Right ventricle myocardium inferior (tissue), 1 donor: ENCODE measurements at regions of chr3 and their contacts with region 1.

Region 1: GRCh38 chr3:111859974-111860859 is 1.2 kb downstream of the PHLDB2 start:
- DNase-seq: peak; percentile 84
- ATAC-seq: peak; percentile 74

Region 2: DNA sequence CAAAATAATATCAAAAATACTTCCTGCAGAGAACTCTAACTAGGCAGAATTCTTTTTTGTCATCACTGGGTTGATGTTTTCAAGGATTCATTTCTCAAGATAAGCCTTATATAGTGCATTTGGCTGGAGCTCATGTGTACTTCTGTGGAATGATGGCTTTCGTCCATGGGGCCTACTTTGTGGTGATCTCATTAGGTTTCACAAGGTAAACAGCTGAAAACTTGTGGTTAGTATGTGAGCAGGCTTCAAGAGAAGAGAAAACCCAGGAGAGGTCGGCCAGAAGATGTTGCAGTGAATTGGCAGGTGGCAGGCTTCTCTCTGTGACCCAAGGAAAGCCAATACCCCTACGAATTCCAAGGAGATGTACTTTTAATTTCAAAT is 122.5 kb before region 1 on chr3:
- intact Hi-C with region 1: loop called (anchors 1 kb)
- DNase-seq: no peak
- ATAC-seq: peak; percentile 85

Region 3: DNA sequence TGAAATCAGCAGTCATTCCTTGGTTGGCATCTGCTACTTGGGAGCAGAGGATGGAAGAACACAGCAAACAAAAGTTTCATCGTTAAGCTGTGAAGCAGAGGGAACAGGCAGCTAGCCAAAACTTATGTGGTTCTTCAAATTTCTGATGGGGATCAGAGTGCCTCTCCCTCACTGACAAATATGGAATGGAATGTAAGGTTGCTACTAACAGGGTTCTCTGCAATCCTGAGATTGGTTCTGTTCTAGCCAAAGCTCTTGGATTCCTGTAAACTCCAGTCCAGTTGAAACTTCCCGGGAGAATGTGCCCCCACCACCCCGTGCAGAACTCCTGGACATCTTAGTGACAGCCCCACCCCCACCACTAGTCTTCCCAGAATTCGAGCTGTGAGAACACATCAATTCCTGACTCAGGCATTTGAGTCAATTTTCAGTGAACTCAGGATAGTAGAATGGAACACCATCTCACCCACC is 57.1 kb before region 1 on chr3:
- intact Hi-C with region 1: loop called (anchors 5 kb)
- DNase-seq: no peak
- ATAC-seq: peak; percentile 83

Region 4: GRCh38 chr3:111917300-111917699 is 57.1 kb after region 1 on chr3:
- intact Hi-C with region 1: loop called (anchors 2 kb)
- DNase-seq: no peak
- ATAC-seq: no peak

Region 5: GRCh38 chr3:111967651-111968274 is 107.5 kb after region 1 on chr3:
- intact Hi-C with region 1: loop called (anchors 1 kb)
- DNase-seq: peak; percentile 82
- ATAC-seq: peak; percentile 76

Region 6: GRCh38 chr3:111978493-111979433 is 118.5 kb after region 1 on chr3 and contains the start of gene ABHD10:
- intact Hi-C with region 1: no loop called
- DNase-seq: peak; percentile 99
- ATAC-seq: peak; percentile 98
- total RNA-seq, gene ABHD10: 51.7 TPM